Astrocyte of the cerebellum (primary cell): ENCODE measurements at regions of chr20 and their contacts with region 1.

Region 1: DNA sequence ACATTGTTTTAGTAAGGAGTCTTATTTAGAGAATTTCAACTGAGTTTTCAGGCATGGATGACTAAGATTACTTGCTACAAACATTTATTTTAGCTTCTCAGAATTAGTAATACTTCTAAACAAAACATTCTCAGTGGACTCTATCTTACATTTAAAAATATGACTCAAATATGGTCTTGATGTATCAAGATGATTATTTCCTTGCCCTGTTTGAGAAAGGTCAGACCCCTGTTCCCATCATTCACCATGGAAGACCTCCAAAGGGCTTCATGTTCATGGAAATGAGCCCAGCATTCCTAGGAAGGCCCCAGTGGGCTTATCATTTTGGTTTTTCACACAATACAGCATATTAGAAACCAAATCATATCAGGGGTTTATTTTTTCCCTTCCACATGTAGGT is 24.6 kb upstream of the TRPC4AP start:
- DNase-seq: no peak
- H3K4me3 ChIP-seq: no peak overlapping the region
- CTCF ChIP-seq: no peak

Region 2: GRCh38 chr20:35192111-35192872 is 75.1 kb after region 1 on chr20:
- in situ Hi-C with region 1: loop called (anchors 5 kb)
- DNase-seq: no peak
- H3K4me3 ChIP-seq: no peak overlapping the region
- CTCF ChIP-seq: no peak